ENCODE measurements at regions of chr4 and their contacts with region 1.

Region 1: GRCh38 chr4:153750197-153750817 is 9.5 kb downstream of the RNF175 start:
- DNase-seq: peak; percentile 81
- ATAC-seq: peak; percentile 97
- H3K4me3 Mint-ChIP-seq: no peak overlapping the region
- H3K27ac Mint-ChIP-seq: no peak overlapping the region
- H3K4me1 Mint-ChIP-seq: peaks cover 9% of the 10 kb centered on the region
- H3K27me3 Mint-ChIP-seq: no peaks in the 10 kb centered on the region

Region 2: DNA sequence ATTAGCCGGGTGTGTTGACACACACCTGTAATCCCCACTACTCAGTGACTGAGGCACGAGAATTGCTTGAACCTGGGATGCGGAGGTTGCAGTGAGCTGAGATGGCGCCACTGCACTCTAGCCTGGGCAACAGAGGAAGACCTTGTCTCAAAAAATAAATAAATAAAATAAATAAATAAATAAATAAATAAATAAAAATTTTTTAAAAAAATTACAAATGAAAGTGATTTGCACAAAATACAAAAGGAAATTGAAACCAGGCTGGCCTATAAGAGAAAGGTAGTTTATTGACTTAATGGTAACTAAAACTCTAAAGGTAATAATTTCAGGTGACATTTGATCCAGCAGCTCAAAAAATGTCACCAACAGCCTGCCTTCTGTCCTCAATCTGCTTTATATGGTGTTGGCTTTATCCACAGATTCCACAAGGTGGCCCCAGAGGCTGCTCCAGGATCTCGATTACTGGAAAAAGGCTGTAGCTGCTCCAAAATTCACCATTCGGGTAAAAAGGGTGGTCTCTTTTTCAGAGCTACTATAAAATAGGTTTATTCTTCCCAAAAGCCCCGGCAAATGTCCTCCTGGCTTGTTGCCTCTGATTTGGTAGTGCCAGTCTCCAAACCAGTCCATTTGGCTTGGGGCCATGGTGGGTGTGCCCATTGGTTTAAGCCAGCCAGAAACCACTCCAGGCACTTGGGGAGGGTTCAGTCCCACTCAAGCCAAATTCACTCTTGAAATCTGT is 607.4 kb before region 1 on chr4:
- CTCF ChIA-PET with region 1: interaction called, 4 read pairs
- POLR2A ChIA-PET with region 1: no interaction called
- intact Hi-C with region 1: loop called in 1 of 2 experiments (anchors 5 kb)
- DNase-seq: peak; percentile 79
- ATAC-seq: peak; percentile 85
- H3K4me3 Mint-ChIP-seq: no peak overlapping the region
- H3K27ac Mint-ChIP-seq: no peak overlapping the region
- H3K4me1 Mint-ChIP-seq: peaks cover 8% of the 10 kb centered on the region
- H3K27me3 Mint-ChIP-seq: peaks cover 3% of the 10 kb centered on the region

Region 3: DNA sequence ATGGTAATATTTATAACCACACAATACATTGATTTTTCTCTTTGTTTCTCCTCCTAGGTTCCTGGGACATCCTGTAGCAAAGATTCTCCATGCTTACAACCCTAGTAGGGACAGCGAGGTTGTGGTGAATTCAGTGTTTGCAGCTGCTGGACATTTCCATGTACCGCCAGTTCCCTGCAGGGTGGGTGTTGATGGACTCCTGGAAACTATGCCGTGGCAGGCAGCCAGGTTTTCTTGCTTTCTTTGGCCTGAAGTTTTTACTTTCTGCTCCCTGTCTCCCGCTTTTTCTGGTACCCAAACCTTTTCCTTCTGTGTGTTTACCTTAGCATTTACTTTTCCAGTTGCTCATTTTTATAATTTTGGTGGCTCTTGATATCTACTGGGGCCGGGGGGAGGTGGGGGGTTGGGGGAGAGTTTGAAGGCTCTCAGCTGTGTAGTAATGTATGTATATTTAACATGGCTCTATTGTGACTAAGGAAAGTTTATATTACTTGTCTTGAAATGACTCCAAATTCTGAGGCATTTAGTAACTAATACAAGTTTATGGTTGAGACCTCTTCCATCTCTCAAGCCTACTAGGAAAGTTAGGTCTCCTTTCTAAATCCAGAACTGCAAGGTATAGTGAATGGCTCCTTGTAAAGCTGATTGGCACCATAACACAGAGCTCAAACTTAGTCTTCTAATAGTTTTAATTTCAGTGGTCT is 194.4 kb before region 1 on chr4:
- CTCF ChIA-PET with region 1: no interaction called
- POLR2A ChIA-PET with region 1: no interaction called
- intact Hi-C with region 1: no loop called
- DNase-seq: no peak
- ATAC-seq: peak; percentile 27
- H3K4me3 Mint-ChIP-seq: no peak overlapping the region
- H3K27ac Mint-ChIP-seq: peak overlapping the region; percentile 47
- H3K4me1 Mint-ChIP-seq: peaks cover 43% of the 10 kb centered on the region
- H3K27me3 Mint-ChIP-seq: no peaks in the 10 kb centered on the region

Region 4: GRCh38 chr4:153634738-153635353 is 115.5 kb before region 1 on chr4:
- CTCF ChIA-PET with region 1: interaction called, 24 read pairs
- POLR2A ChIA-PET with region 1: no interaction called
- intact Hi-C with region 1: loop called in 1 of 2 experiments (anchors 1 kb)
- DNase-seq: no peak
- ATAC-seq: peak; percentile 72
- H3K4me3 Mint-ChIP-seq: no peak overlapping the region
- H3K27ac Mint-ChIP-seq: peak overlapping the region; percentile 10
- H3K4me1 Mint-ChIP-seq: no peaks in the 10 kb centered on the region
- H3K27me3 Mint-ChIP-seq: no peaks in the 10 kb centered on the region

Region 5: GRCh38 chr4:153649572-153649991 is 100.7 kb before region 1 on chr4:
- CTCF ChIA-PET with region 1: interaction called, 69 read pairs
- POLR2A ChIA-PET with region 1: no interaction called
- intact Hi-C with region 1: loop called (anchors 1 to 5 kb)
- DNase-seq: peak; percentile 44
- ATAC-seq: peak; percentile 24
- H3K4me3 Mint-ChIP-seq: no peak overlapping the region
- H3K27ac Mint-ChIP-seq: no peak overlapping the region
- H3K4me1 Mint-ChIP-seq: peaks cover 37% of the 10 kb centered on the region
- H3K27me3 Mint-ChIP-seq: no peaks in the 10 kb centered on the region

Region 6: GRCh38 chr4:153661211-153661822 is 89.0 kb before region 1 on chr4:
- CTCF ChIA-PET with region 1: no interaction called
- POLR2A ChIA-PET with region 1: no interaction called
- intact Hi-C with region 1: no loop called
- DNase-seq: no peak
- ATAC-seq: no peak
- H3K4me3 Mint-ChIP-seq: no peak overlapping the region
- H3K27ac Mint-ChIP-seq: no peak overlapping the region
- H3K4me1 Mint-ChIP-seq: no peaks in the 10 kb centered on the region
- H3K27me3 Mint-ChIP-seq: no peaks in the 10 kb centered on the region

Region 7: DNA sequence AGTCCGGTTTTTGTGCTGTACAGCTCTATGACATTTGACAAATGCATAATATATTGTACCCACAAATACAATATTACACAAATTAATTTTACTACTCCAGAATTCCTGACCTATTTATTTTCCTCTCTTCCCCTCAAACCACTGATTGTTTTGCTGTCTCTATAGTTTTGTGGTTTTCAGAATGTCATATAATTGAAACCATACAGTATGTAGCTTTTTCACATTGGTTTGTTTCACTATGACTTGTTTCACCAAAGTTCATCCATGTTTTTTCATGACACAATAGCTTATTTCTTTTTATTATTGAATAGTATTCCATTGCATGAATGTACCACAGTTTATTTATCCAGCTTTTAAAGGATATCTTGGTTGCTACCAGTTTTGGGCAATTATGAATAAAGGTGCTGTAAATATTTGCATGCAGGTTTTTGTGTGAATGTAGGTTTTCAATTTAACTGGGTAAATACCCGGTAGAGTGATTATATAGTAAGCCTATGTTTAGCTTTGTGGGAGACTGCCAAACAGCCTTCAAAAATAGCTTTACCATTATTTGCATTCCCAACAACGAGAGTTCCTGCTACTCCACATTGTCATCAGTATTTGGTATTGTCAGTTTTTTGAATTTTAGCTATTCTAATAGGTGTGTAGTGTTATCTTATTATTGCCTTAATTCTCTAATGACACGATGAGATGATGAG is 16.4 kb before region 1 on chr4:
- CTCF ChIA-PET with region 1: interaction called, 15 read pairs
- POLR2A ChIA-PET with region 1: no interaction called
- intact Hi-C with region 1: no loop called
- DNase-seq: no peak
- ATAC-seq: no peak
- H3K4me3 Mint-ChIP-seq: no peak overlapping the region
- H3K27ac Mint-ChIP-seq: no peak overlapping the region
- H3K4me1 Mint-ChIP-seq: peaks cover 12% of the 10 kb centered on the region
- H3K27me3 Mint-ChIP-seq: peaks cover 2% of the 10 kb centered on the region

Region 8: DNA sequence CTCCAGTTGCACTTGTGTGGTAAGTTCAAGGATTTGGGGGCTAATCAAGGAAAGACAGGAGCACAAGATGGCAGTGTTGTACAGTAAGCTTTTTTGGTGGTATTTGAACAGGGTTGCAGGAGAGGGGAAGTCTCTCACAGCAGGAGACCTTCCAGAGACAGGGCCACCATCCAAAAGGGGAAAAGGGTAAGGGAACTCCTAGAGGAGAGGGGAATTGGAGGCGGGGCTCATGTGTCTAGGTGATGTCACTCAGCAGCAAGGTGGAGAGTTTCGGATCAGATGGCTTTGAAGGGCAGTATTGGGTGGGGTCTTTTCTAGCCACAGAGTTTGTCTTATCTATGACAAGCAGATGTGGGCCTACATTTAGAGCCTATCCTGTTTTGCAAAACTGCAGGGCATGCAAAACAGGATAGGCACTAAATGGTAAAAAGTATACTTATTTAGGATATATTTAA is 23.0 kb after region 1 on chr4:
- CTCF ChIA-PET with region 1: no interaction called
- POLR2A ChIA-PET with region 1: no interaction called
- intact Hi-C with region 1: no loop called
- DNase-seq: no peak
- ATAC-seq: no peak
- H3K4me3 Mint-ChIP-seq: no peak overlapping the region
- H3K27ac Mint-ChIP-seq: no peak overlapping the region
- H3K4me1 Mint-ChIP-seq: no peaks in the 10 kb centered on the region
- H3K27me3 Mint-ChIP-seq: peaks cover 33% of the 10 kb centered on the region

Region 9: GRCh38 chr4:153822316-153822715 is 72.0 kb after region 1 on chr4:
- CTCF ChIA-PET with region 1: no interaction called
- POLR2A ChIA-PET with region 1: no interaction called
- intact Hi-C with region 1: no loop called
- DNase-seq: no peak
- ATAC-seq: no peak
- H3K4me3 Mint-ChIP-seq: no peak overlapping the region
- H3K27ac Mint-ChIP-seq: no peak overlapping the region
- H3K4me1 Mint-ChIP-seq: no peaks in the 10 kb centered on the region
- H3K27me3 Mint-ChIP-seq: peaks cover 11% of the 10 kb centered on the region

Measured in activated CD4-positive, alpha-beta T cell treated with anti-CD3 and anti-CD28 coated beads for 36 hours (primary cell).